ENCODE measurements at regions of chr3 and their contacts with region 1.

Region 1: DNA sequence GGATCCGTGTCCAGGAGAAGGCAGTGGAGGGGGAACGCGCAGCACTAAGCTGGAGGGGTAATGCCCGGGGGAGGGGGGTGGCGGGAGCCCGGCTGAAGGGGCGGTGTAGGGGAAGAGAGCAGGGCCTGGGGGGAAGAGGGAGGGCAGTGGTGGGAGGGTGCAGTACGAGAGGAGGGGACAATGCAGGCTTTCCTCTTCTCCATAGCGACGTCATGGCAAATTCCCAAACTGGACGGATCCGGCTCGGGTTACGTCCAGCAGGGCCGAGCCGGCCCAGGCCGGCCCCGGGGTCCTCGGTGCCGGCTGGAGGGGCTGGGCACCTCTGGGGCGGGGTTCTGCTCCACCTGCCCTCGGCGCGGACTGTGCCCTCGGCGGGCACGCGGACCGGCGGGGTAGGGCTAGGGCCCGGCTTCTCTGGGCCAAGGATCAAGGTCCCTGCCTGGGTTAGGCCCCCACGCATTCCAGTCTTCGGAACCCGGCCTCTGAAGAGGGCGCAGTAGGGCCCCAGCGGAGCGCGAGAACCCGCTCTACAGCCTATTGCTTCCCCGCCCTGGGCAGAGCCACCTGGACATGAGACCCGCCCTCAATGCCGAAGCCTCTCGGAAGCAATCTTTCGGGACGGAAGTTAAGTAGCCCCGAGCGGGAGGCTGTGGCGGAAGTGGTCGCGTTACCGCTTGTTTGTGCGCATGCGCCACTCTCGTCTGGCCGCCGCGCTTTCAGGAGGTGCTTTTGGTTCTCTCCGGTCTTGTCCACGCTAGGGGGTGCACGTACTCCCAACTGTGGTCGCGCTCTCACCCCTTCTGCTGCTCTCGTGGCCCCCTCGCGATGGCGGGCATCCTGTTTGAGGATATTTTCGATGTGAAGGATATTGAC is 1.4 kb downstream of the POLR2H start:
- DNase-seq: peak; percentile 97

Region 2: DNA sequence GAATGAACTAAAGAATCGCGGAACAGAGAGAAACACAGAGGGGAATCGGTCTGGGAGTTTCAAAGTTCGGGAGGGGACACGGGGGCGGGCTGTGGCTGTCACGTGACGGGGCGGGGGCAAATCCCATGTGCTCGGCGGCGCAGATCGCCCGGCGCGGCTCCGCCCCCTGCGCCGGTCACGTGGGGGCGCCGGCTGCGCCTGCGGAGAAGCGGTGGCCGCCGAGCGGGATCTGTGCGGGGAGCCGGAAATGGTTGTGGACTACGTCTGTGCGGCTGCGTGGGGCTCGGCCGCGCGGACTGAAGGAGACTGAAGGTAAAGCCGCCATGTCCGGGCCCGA is 48.6 kb before region 1 on chr3 and contains the start of gene EIF4G1:
- intact Hi-C with region 1: loop called (anchors 2 kb)
- DNase-seq: peak; percentile 97
- total RNA-seq, gene EIF4G1: 284 TPM

Region 3: GRCh38 chr3:184716622-184717398 is 353.9 kb after region 1 on chr3:
- intact Hi-C with region 1: loop called (anchors 5 kb)
- DNase-seq: no peak

Measured in cardiac septum (tissue), 1 donor.